ENCODE measurements at regions of chr15 and their contacts with region 1.

Region 1: GRCh38 chr15:27956285-27956684 is 142.8 kb downstream of the OCA2 start:
- DNase-seq: no peak
- H3K4me3 ChIP-seq: no peak overlapping the region
- H3K27ac ChIP-seq: no peak overlapping the region
- H3K4me1 ChIP-seq: no peaks in the 10 kb centered on the region
- H3K27me3 ChIP-seq: no peaks in the 10 kb centered on the region
- CTCF ChIP-seq: no peak

Region 2: DNA sequence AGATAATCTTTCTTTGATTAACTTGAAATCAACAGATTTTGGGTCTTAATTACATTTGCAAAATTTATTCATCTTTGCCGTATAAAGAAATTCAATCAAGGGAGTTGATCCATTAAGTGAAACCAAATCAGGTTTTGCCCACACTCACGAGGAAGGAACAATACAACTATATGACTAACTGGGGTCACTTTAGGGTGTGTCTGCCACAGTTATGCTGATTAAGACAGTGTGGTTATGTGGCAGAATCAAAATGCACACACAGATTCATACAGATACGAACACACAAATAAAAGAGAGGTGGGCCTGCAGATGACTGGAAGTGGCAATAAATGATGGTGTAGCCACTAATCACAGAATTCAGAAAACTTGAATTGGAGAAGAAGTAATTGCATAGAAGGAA is 441.8 kb before region 1 on chr15:
- CTCF ChIA-PET with region 1: no interaction called
- dilution Hi-C with region 1: no loop called
- in situ Hi-C with region 1: no loop called
- intact Hi-C with region 1: no loop called
- DNase-seq: no peak
- H3K4me3 ChIP-seq: no peak overlapping the region
- H3K27ac ChIP-seq: no peak overlapping the region
- H3K4me1 ChIP-seq: no peaks in the 10 kb centered on the region
- H3K27me3 ChIP-seq: no peaks in the 10 kb centered on the region
- CTCF ChIP-seq: no peak

Region 3: GRCh38 chr15:28021281-28022039 is 65.2 kb after region 1 on chr15:
- CTCF ChIA-PET with region 1: no interaction called
- dilution Hi-C with region 1: loop called (anchors 5 kb)
- in situ Hi-C with region 1: no loop called
- intact Hi-C with region 1: no loop called
- DNase-seq: peak; percentile 2
- H3K4me3 ChIP-seq: no peak overlapping the region
- H3K27ac ChIP-seq: no peak overlapping the region
- H3K4me1 ChIP-seq: no peaks in the 10 kb centered on the region
- H3K27me3 ChIP-seq: no peaks in the 10 kb centered on the region
- CTCF ChIP-seq: peak in 1 of 2 donors; percentile 8